ENCODE measurements at regions of chr5 and their contacts with region 1.

Region 1: DNA sequence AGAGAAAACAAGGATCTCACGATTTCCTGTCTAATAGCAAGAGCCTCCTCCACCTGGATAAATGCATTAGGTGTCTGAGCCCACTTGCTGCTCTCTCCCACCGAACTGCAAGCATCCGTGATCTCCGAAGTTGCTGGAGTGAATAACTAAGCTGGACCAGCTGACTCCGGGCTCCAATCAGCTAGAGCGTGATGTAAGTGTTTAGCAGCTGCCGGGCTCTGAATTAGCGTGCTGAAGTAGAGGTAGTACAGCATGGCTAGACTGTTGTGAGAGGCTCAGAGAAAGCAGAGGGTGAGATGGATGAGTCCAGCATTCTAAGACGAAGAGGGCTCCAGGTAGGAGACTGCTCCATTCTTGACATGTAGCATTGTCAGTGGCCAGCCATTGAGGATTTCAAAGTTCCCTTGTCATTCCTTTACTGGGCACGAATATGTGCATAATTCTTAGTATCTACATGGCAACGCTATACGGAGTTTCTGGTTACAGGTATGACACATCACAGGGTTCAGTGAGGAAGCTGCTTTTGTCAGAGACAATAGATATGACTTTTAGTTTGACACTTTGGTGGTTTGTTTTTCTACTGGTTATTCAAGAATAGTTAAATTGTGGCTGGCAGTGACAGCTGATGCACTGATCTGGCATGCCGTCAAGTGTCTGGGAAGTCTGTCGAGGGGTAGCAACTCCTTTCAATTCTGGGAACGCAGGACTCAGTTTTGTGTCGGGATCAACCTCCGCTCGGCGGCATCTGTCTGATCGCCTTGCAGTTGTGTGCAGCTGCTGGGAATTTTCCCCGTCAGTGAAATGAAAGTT is 232.6 kb downstream of the MAST4 start:
- DNase-seq: peak; percentile 92
- H3K4me3 ChIP-seq: peak overlapping the region; percentile 54 to 70 (median 55)
- H3K27ac ChIP-seq: peak overlapping the region; percentile 91
- H3K4me1 ChIP-seq: peaks cover 22% of the 10 kb centered on the region
- H3K27me3 ChIP-seq: no peaks in the 10 kb centered on the region
- CTCF ChIP-seq: no peak
- POLR2A ChIP-seq: peak; percentile 95

Region 2: GRCh38 chr5:66291771-66292170 is 537.0 kb before region 1 on chr5:
- CTCF ChIA-PET with region 1: no interaction called
- POLR2A ChIA-PET with region 1: no interaction called
- dilution Hi-C with region 1: no loop called
- intact Hi-C with region 1: no loop called
- DNase-seq: no peak
- H3K4me3 ChIP-seq: no peak overlapping the region
- H3K27ac ChIP-seq: no peak overlapping the region
- H3K4me1 ChIP-seq: no peaks in the 10 kb centered on the region
- H3K27me3 ChIP-seq: peaks cover 0 to 2% of the 10 kb centered on the region in 2 experiments
- CTCF ChIP-seq: no peak
- POLR2A ChIP-seq: no peak

Region 3: DNA sequence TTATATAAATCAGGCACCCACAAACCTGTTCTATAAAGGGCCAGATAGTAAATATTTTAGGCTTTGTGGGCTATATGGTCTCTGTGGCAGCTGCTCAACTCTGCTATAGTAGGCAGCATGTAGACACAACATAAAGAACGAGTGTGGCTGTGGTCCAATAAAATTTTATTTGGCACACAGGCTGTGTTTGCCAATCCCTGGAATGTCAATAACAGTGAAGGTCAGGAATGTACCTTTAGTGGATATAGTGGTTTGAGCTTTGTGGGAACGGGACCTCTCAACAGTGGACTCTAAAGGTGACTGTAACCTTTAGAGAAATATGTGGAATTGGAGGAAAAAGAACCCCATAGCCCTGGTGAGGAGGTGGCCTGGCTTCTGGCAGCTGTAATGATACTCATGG is 87.4 kb before region 1 on chr5:
- CTCF ChIA-PET with region 1: no interaction called
- POLR2A ChIA-PET with region 1: no interaction called
- dilution Hi-C with region 1: no loop called
- intact Hi-C with region 1: no loop called
- DNase-seq: no peak
- H3K4me3 ChIP-seq: no peak overlapping the region
- H3K27ac ChIP-seq: no peak overlapping the region
- H3K4me1 ChIP-seq: no peaks in the 10 kb centered on the region
- H3K27me3 ChIP-seq: peaks cover 6 to 13% of the 10 kb centered on the region in 2 experiments
- CTCF ChIP-seq: no peak
- POLR2A ChIP-seq: no peak

Region 4: GRCh38 chr5:66814146-66814991 is 14.4 kb before region 1 on chr5:
- CTCF ChIA-PET with region 1: interaction called, 130 read pairs
- POLR2A ChIA-PET with region 1: interaction called, 15 read pairs
- dilution Hi-C with region 1: no loop called
- intact Hi-C with region 1: loop called (anchors 1 kb)
- DNase-seq: peak; percentile 63
- H3K4me3 ChIP-seq: no peak overlapping the region
- H3K27ac ChIP-seq: no peak overlapping the region
- H3K4me1 ChIP-seq: no peaks in the 10 kb centered on the region
- H3K27me3 ChIP-seq: peaks cover 0 to 2% of the 10 kb centered on the region in 2 experiments
- CTCF ChIP-seq: peak; percentile 62 to 75
- POLR2A ChIP-seq: no peak

Region 5: DNA sequence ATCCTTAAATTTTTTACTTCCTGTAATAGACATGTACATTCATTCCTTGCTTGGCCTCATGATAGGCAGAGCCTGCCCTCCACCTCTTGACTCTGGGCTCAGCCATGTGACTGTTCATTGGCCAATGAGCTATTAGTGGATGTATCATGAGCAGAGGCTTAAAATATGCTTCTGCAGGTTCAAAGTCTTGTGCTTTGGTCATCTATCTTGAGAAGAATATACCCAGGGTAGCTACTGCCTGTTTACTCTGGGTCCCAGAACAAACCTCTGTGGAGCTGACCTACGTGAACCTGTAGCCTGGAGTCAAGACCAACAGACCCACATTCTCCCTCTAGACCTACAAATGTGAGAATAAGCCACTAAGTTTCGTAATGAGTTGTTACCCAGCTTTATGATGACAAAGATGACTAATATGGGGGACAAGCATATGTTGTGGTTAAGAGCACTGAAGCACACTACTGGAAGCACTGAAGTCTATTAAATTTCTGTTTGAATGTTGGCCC is 11.8 kb after region 1 on chr5:
- CTCF ChIA-PET with region 1: interaction called, 63 read pairs
- POLR2A ChIA-PET with region 1: interaction called, 76 read pairs
- dilution Hi-C with region 1: no loop called
- intact Hi-C with region 1: loop called (anchors 1 kb)
- DNase-seq: no peak
- H3K4me3 ChIP-seq: no peak overlapping the region
- H3K27ac ChIP-seq: no peak overlapping the region
- H3K4me1 ChIP-seq: peaks cover 29% of the 10 kb centered on the region
- H3K27me3 ChIP-seq: no peaks in the 10 kb centered on the region
- CTCF ChIP-seq: no peak
- POLR2A ChIP-seq: no peak

Region 6: DNA sequence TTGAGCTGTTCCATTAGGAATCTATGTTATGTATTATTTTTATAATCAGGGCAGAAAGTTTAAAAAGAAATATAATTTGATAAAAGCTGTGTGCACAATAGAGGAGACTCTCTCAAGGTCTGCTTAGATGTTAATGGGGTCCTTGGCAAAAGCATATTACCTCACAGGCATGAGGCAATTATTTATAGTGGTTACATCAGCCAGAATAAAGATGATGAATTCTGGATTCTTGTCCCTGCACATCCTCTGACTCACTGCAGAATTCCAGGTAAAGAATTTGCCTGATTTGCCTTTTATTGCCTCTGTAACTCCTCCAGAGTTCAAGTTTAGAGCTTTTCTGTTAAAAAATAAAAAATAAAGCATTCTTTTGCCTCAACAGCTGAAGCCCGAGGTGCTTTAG is 21.1 kb after region 1 on chr5:
- CTCF ChIA-PET with region 1: interaction called, 26 read pairs
- POLR2A ChIA-PET with region 1: interaction called, 76 read pairs
- dilution Hi-C with region 1: no loop called
- intact Hi-C with region 1: loop called (anchors 1 kb)
- DNase-seq: peak; percentile 54
- H3K4me3 ChIP-seq: no peak overlapping the region
- H3K27ac ChIP-seq: peak overlapping the region; percentile 78
- H3K4me1 ChIP-seq: peaks cover 37% of the 10 kb centered on the region
- H3K27me3 ChIP-seq: no peaks in the 10 kb centered on the region
- CTCF ChIP-seq: no peak
- POLR2A ChIP-seq: no peak